Activated B cell treated with CpG ODN at 0.5 μM for 24 hours (primary cell): ENCODE measurements at regions of chr16 and their contacts with region 1.

Region 1: DNA sequence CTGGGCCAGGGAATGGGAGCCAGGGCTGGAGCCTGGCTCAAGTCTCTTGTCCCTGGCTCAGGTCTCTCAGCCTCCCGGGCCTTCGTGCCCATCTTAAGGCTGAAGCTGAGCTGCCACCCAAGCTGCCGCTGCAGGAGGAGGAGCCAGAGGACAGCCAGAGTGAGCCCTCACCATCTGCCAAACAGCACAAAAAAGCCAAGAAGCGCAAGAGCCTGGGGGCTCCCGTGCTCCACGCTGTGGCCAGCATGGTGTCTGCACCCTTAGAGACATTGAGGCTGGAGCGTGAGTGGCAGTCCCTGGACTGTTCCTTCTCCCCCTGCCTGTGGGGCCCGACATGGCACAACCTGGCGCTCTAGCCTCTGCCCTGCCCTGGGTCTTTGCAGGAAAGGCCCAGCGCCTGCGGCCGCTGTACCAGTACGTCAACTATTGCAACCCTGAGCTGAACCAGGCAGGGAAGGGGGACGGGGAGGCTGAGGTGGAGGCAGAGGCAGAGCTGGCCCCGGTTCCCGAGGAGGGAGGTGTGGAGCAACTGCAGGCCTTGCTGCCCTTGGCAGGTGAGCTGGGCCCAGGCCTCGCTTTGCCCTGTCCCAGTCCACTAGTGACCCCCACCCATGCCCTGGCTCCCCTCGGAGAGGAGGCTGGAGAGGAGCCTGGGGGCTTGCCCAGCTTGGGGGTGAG is 1.3 kb downstream of the C16orf86 start:
- DNase-seq: peak; percentile 66
- ATAC-seq: peak; percentile 84
- H3K4me3 Mint-ChIP-seq: peak overlapping the region; percentile 87
- H3K27ac Mint-ChIP-seq: peak overlapping the region; percentile 85
- H3K4me1 Mint-ChIP-seq: peaks cover 49% of the 10 kb centered on the region
- H3K27me3 Mint-ChIP-seq: no peaks in the 10 kb centered on the region
- CTCF ChIP-seq: no peak

Region 2: GRCh38 chr16:67428146-67428731 is 239.7 kb before region 1 on chr16:
- CTCF ChIA-PET with region 1: no interaction called
- POLR2A ChIA-PET with region 1: no interaction called
- intact Hi-C with region 1: loop called (anchors 5 kb)
- DNase-seq: peak; percentile 51
- ATAC-seq: peak; percentile 76
- H3K4me3 Mint-ChIP-seq: no peak overlapping the region
- H3K27ac Mint-ChIP-seq: no peak overlapping the region
- H3K4me1 Mint-ChIP-seq: peaks cover 19% of the 10 kb centered on the region
- H3K27me3 Mint-ChIP-seq: peaks cover 37% of the 10 kb centered on the region
- CTCF ChIP-seq: peak; percentile 65

Region 3: GRCh38 chr16:67499106-67499505 is 168.8 kb before region 1 on chr16:
- CTCF ChIA-PET with region 1: interaction called, 21 read pairs
- POLR2A ChIA-PET with region 1: no interaction called
- intact Hi-C with region 1: loop called (anchors 1 kb)
- DNase-seq: no peak
- ATAC-seq: no peak
- H3K4me3 Mint-ChIP-seq: no peak overlapping the region
- H3K27ac Mint-ChIP-seq: no peak overlapping the region
- H3K4me1 Mint-ChIP-seq: peaks cover 28% of the 10 kb centered on the region
- H3K27me3 Mint-ChIP-seq: no peaks in the 10 kb centered on the region
- CTCF ChIP-seq: no peak

Region 4: DNA sequence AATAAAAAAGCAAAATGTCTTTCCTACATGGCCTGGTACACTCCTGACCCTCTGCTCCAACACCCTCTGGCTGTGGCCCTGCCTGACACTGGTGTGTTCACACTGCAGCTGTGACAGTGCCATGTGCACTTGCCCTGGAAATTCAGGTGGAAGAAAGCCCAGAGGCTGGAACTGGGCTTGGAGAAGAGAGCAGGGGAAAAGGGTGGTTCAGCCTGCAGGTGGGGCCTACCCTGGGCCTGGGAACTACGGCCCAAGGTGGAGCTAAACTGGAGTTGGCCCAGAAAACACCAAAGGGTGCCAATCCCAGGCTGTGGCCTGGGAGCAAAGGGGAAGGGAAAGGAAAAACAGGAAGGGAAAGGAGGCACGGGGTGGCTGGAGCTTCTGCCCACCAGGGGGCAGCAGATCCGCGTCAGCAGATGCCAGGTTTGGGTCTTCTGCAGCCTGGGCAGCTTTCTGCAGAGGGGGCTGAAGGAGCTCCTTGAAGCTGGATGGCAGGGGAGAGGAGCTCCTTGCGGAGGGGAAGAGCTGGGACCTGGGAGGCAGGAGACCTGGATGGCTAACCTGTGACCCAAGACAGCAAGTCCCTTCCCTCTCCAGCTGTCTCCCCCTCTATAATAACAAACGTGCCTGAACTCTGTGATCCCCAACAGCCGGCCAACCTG is 121.1 kb before region 1 on chr16:
- CTCF ChIA-PET with region 1: interaction called, 61 read pairs
- POLR2A ChIA-PET with region 1: interaction called, 6 read pairs
- intact Hi-C with region 1: loop called (anchors 1 kb)
- DNase-seq: peak; percentile 73
- ATAC-seq: no peak
- H3K4me3 Mint-ChIP-seq: peak overlapping the region; percentile 58
- H3K27ac Mint-ChIP-seq: peak overlapping the region; percentile 95
- H3K4me1 Mint-ChIP-seq: peaks cover 87% of the 10 kb centered on the region
- H3K27me3 Mint-ChIP-seq: no peaks in the 10 kb centered on the region
- CTCF ChIP-seq: peak; percentile 95

Region 5: GRCh38 chr16:68074850-68075555 is 407.0 kb after region 1 on chr16:
- CTCF ChIA-PET with region 1: no interaction called
- POLR2A ChIA-PET with region 1: no interaction called
- intact Hi-C with region 1: loop called (anchors 10 kb)
- DNase-seq: peak; percentile 76
- ATAC-seq: peak; percentile 90
- H3K4me3 Mint-ChIP-seq: peak overlapping the region; percentile 81
- H3K27ac Mint-ChIP-seq: peak overlapping the region; percentile 96
- H3K4me1 Mint-ChIP-seq: peaks cover 88% of the 10 kb centered on the region
- H3K27me3 Mint-ChIP-seq: no peaks in the 10 kb centered on the region
- CTCF ChIP-seq: no peak

Region 6: GRCh38 chr16:68237243-68238028 is 569.5 kb after region 1 on chr16:
- CTCF ChIA-PET with region 1: no interaction called
- POLR2A ChIA-PET with region 1: no interaction called
- intact Hi-C with region 1: loop called (anchors 10 kb)
- DNase-seq: peak; percentile 84
- ATAC-seq: peak; percentile 83
- H3K4me3 Mint-ChIP-seq: peak overlapping the region; percentile 93
- H3K27ac Mint-ChIP-seq: peak overlapping the region; percentile 79
- H3K4me1 Mint-ChIP-seq: peaks cover 33% of the 10 kb centered on the region
- H3K27me3 Mint-ChIP-seq: no peaks in the 10 kb centered on the region
- CTCF ChIP-seq: no peak